Dorsolateral prefrontal cortex (tissue), 120 donors: ENCODE measurements at regions of chr4 and their contacts with region 1.

Region 1: GRCh38 chr4:56435306-56435926 is at the start of gene PPAT:
- DNase-seq: peak; percentile 93 to 98 (median 97)
- H3K4me3 ChIP-seq: peak within 1 kb of the TSS; percentile 55 to 97 (median 85)
- H3K27ac ChIP-seq: peak within 1 kb of the TSS; percentile 77 to 99 (median 97)
- H3K27me3 ChIP-seq: no peaks in the 10 kb centered on the region
- CTCF ChIP-seq: peak in 55 of 56 donors; percentile 17 to 75 (median 55)
- total RNA-seq, gene PPAT: 10.2 to 29.3 (median 17.8) TPM

Region 2: GRCh38 chr4:56387023-56388001 is 48.1 kb before region 1 on chr4 and contains the start of gene AASDH:
- intact Hi-C with region 1: loop called (anchors 5 kb)
- DNase-seq: peak; percentile 90 to 96 (median 94)
- H3K4me3 ChIP-seq: peak within 1 kb of the TSS; percentile 59 to 99 (median 82)
- H3K27ac ChIP-seq: peak within 1 kb of the TSS; percentile 72 to 99 (median 96)
- H3K27me3 ChIP-seq: no peaks in the 10 kb centered on the region
- CTCF ChIP-seq: peak in 21 of 56 donors; percentile 2 to 44 (median 22)
- total RNA-seq, gene AASDH: 14.0 to 39.1 (median 21.7) TPM

Region 3: GRCh38 chr4:56467284-56468096 is 32.1 kb after region 1 on chr4 and contains the start of gene SRP72:
- intact Hi-C with region 1: loop called (anchors 1 to 2 kb)
- DNase-seq: peak; percentile 82 to 92 (median 89)
- H3K4me3 ChIP-seq: peak within 1 kb of the TSS; percentile 63 to 99 (median 95)
- H3K27ac ChIP-seq: peak within 1 kb of the TSS in 57 of 59 donors; percentile 14 to 90 (median 80)
- H3K27me3 ChIP-seq: no peaks in the 10 kb centered on the region
- CTCF ChIP-seq: peak in 20 of 56 donors; percentile 8 to 50 (median 21)
- total RNA-seq, gene SRP72: 47.9 to 110 (median 81.9) TPM

Region 4: GRCh38 chr4:56530269-56531148 is 95.1 kb after region 1 on chr4:
- intact Hi-C with region 1: loop called in 1 of 2 experiments (anchors 5 kb)
- DNase-seq: peak; percentile 69 to 88 (median 80)
- H3K4me3 ChIP-seq: peak overlapping the region; percentile 43 to 82 (median 67)
- H3K27ac ChIP-seq: peak overlapping the region in 14 of 59 donors; percentile 18 to 78 (median 60)
- H3K27me3 ChIP-seq: peaks cover 0 to 11% (median 0%) of the 10 kb centered on the region in 45 donors
- CTCF ChIP-seq: peak in 1 of 56 donors; percentile 11

Region 5: DNA sequence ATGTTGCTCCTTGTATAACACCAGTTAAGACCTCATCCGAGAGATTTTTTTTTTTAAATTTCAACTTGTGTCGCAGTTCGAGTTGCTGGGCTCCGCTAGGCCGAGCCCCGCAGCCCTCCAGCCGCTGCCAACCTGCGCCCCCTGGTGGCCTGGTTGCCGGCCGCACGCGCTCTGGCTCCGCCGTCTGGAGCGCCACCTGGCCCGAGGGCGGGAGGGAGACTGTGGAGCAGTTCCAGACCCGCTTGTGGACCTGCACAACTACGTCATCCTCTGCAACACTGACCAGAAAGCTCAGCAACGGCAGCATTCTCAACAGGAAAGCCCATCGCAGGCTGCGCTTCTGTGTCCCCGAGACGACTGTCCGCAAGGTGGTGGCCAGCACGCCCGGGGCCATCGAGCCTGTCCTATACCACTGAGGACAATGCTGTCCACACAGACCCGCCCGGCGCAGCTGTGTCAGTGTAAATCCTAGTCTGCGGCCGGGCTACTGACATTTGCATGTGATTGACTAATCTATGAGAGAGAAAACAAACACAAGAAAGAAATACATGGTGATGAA is 109.2 kb after region 1 on chr4:
- intact Hi-C with region 1: loop called (anchors 2 kb)
- DNase-seq: peak; percentile 79 to 94 (median 87)
- H3K4me3 ChIP-seq: peak overlapping the region; percentile 34 to 76 (median 55)
- H3K27ac ChIP-seq: peak overlapping the region in 57 of 59 donors; percentile 50 to 96 (median 85)
- H3K27me3 ChIP-seq: no peaks in the 10 kb centered on the region
- CTCF ChIP-seq: peak; percentile 83 to 100 (median 99)

Region 6: DNA sequence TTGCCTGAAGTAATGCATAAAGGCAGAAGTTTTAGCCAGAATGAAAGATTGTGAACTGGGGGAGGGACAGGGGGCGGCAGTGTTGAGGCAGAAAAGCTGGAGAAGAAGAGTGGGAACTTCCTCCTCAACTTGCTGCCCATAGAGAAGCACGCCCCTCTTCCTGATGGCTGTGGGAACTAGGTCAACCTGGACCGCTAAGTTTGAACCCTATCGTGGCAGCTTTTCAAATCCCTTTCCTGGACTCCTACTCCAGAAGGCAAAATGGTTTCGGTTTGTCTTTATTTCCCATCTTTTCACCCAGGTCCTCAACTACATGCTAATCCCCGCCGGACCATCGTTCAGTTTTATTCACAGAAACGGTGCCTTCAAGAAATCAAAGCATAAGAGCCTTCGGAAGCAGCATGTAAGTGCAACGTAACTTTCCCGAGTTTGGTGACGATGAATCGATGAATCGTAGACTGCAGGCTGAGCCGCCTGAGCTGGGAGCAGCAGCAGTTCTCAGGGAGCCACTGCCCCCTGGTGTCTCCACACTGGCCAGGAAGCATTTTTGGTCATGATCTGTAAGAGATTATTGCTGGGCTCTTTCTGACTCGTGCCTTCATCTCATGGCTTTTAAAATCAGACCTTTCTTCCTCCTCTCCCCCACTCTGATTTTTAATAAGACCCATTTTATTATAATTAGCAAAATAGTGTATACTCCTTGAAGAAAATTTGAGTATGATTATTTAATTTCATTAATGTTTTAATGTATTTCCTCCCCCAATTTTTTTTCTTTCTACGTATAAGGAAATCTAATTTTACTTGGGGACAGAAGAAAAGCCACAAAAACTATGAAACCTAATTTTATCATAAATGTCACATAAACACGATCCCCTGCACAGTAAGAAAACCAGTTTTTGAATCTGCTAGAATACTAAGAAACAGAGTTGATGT is 364.7 kb after region 1 on chr4:
- intact Hi-C with region 1: loop called in 1 of 2 experiments (anchors 10 kb)
- DNase-seq: peak; percentile 40 to 91 (median 87)
- H3K4me3 ChIP-seq: peak overlapping the region; percentile 49 to 83 (median 70)
- H3K27ac ChIP-seq: peak overlapping the region in 51 of 59 donors; percentile 3 to 89 (median 74)
- H3K27me3 ChIP-seq: no peaks in the 10 kb centered on the region
- CTCF ChIP-seq: peak; percentile 62 to 96 (median 87)